ENCODE measurements at regions of chr20 and their contacts with region 1.

Region 1: DNA sequence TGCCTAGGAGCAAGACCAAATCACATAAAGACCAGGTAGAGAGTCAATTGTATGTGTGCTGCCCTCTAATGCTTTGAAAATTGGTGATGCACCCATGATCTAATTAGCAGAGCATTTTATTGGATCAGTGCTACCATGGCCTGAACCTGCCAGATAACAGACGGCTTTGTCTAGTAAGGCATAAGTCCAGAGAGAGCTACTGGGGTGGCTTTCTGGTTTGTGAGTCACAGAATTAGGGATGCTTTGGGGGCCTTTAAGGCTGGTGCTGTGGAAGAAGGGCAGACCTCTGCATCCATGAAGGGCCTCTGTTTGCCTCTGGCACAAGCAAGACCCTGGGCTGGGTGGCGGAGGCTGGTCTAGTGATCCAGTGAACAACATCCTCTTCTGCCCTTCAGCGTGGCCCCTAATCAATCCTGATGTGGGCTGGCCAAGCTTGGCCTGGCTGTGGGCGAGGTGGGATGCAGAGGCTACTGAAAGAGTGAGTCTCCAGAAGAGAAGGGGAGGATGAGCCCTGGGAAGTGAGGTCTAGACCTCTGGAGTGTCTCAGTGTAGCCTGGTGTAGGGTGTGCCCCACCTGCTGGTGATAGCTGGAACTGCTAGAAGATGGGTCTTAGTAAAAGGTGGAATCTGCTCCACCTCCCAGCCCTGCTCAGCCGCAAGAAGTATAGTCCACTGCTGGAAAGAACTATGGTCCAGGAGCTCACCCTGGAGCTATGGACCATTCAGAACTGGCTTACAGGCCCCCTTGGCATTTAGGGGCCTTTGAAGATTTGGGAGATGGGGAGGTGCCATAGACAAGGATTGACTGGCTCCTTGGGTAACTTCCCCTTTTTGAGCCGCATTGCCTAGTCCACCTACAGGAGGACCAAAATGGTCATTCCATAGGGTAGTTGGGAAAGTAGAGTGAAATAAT is 36.7 kb upstream of the AAR2 start:
- DNase-seq: peak; percentile 93
- ATAC-seq: peak; percentile 86
- H3K4me3 Mint-ChIP-seq: no peak overlapping the region
- H3K27ac Mint-ChIP-seq: no peak overlapping the region
- H3K4me1 Mint-ChIP-seq: peaks cover 4% of the 10 kb centered on the region
- H3K27me3 Mint-ChIP-seq: no peaks in the 10 kb centered on the region
- CTCF ChIP-seq: peak; percentile 86

Region 2: GRCh38 chr20:36098364-36098763 is 101.2 kb before region 1 on chr20:
- CTCF ChIA-PET with region 1: interaction called, 12 read pairs
- POLR2A ChIA-PET with region 1: no interaction called
- DNase-seq: no peak
- ATAC-seq: no peak
- H3K4me3 Mint-ChIP-seq: no peak overlapping the region
- H3K27ac Mint-ChIP-seq: no peak overlapping the region
- H3K4me1 Mint-ChIP-seq: peaks cover 28% of the 10 kb centered on the region
- H3K27me3 Mint-ChIP-seq: peaks cover 100% of the 10 kb centered on the region
- CTCF ChIP-seq: no peak

Region 3: DNA sequence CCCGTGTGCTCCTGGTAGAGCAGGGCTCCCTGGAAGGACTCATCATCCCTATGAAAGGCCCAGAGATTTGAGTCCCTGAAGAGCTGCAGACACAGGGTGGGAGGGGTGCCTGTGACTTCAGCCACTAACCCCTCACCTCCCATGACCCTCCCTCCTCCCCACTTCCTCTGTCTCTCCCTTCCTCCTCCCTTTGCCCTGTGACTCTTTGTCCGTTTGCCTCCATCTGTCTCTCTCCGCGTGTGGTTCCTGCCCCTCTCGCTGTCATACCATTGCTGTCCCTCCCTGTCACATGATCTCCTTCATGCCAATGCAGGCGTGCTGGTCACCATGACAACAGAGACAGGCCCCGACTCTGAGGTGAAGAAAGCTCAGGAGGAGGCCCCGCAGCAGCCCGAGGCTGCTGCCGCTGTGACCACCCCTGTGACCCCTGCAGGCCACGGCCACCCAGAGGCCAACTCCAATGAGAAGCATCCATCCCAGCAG is 26.1 kb before region 1 on chr20:
- CTCF ChIA-PET with region 1: interaction called, 20 read pairs
- POLR2A ChIA-PET with region 1: no interaction called
- DNase-seq: peak; percentile 69
- ATAC-seq: peak; percentile 86
- H3K4me3 Mint-ChIP-seq: peak overlapping the region; percentile 14; the same call in 1 of the 2 replicates
- H3K27ac Mint-ChIP-seq: 0 out of 2 replicates have a peak overlapping the region, but pooled peaks have one; percentile 9
- H3K4me1 Mint-ChIP-seq: peaks cover 23% of the 10 kb centered on the region
- H3K27me3 Mint-ChIP-seq: no peaks in the 10 kb centered on the region
- CTCF ChIP-seq: no peak

Region 4: DNA sequence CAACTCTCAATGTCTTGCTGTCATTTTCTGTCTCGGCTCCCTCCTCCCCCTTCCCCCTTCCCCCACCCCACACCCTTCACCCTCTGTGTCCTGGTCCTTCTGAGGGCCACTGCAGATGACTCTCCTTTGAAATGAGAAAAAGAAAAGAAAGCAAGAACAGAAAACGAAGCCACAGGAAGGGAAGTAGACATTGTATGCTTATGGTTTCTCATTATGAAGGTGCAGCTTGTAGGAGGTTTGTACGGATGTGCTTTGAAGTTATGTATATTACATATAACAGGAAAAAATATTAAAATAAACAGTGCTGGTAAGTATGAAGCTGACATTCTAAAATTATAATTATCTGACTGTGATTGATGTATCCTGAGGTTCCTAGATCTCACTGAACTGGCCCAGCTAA is 30.4 kb after region 1 on chr20:
- CTCF ChIA-PET with region 1: interaction called, 16 read pairs
- POLR2A ChIA-PET with region 1: no interaction called
- DNase-seq: no peak
- ATAC-seq: no peak
- H3K4me3 Mint-ChIP-seq: no peak overlapping the region
- H3K27ac Mint-ChIP-seq: no peak overlapping the region
- H3K4me1 Mint-ChIP-seq: no peaks in the 10 kb centered on the region
- H3K27me3 Mint-ChIP-seq: no peaks in the 10 kb centered on the region
- CTCF ChIP-seq: no peak

Region 5: DNA sequence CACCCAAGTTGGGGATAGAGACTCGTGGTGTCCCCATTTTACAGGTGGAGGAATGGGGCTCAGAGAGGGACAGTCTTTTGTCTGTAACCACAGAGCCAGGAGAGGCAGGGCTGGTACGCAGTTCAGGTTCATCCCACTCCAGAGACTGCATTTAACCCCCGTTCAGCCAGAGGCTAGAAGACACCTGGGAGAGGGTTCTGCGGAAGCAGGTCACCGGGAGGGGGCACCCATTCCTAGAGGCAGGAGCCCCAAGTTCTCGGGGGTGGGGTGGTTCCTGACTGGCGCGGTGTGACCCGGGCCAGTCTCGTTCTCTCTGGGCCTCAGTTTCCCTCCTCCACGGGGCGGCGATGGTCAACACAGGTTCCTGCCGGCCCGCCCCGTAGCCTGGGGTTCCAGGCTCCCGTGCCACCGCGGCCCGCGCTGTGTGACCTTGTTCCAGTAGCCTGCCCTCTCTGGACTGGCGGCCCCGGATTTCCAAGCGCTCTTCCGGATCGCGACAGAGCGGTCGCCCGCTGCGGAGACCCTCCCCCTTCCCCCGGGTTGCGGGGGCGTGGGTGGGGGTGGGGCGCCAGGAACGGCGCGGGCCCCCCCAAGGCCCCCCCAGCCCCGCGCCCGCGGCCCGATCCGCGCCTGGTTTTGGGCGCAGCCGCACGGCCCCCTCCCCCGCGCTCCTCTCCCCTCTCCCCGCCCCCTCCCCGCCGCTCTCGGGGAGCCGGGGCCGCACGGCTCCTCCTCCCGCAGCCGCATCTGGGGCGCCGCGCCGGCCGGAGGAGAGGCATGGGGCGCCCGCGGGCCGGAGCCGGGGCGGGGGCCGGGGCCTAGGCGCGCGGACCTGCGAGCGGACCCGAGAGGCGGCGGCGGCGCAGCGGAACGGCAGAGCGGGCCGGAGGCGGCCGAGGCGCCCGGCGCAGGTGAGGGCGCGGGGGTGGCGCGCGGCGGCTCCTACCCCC is 106.3 kb after region 1 on chr20 and contains the start of gene DLGAP4:
- CTCF ChIA-PET with region 1: interaction called, 11 read pairs
- POLR2A ChIA-PET with region 1: interaction called, 4 read pairs
- DNase-seq: peak; percentile 39
- ATAC-seq: peak; percentile 55
- H3K4me3 Mint-ChIP-seq: peak within 1 kb of the TSS; percentile 72
- H3K27ac Mint-ChIP-seq: no peak within 1 kb of the TSS
- H3K4me1 Mint-ChIP-seq: peaks cover 21% of the 10 kb centered on the region
- H3K27me3 Mint-ChIP-seq: peaks cover 45% of the 10 kb centered on the region
- CTCF ChIP-seq: no peak
- total RNA-seq, gene DLGAP4: 52.6 to 54.6 TPM (median 54.6 TPM) in 3 replicates

Region 6: GRCh38 chr20:36493013-36493800 is 293.6 kb after region 1 on chr20:
- CTCF ChIA-PET with region 1: interaction called, 10 read pairs
- POLR2A ChIA-PET with region 1: no interaction called
- DNase-seq: peak; percentile 56
- ATAC-seq: peak; percentile 72
- H3K4me3 Mint-ChIP-seq: no peak overlapping the region
- H3K27ac Mint-ChIP-seq: peak overlapping the region; percentile 75; the same call in 1 of the 2 replicates
- H3K4me1 Mint-ChIP-seq: peaks cover 9% of the 10 kb centered on the region
- H3K27me3 Mint-ChIP-seq: no peaks in the 10 kb centered on the region; the same call in 1 of the 2 replicates
- CTCF ChIP-seq: no peak; the same call in 1 of the 2 replicates